ENCODE measurements at regions of chr17 and their contacts with region 1.

Region 1: GRCh38 chr17:5793899-5794298 is 209.6 kb upstream of the NLRP1 start:
- DNase-seq: peak; percentile 64
- H3K4me3 ChIP-seq: no peak overlapping the region
- H3K27ac ChIP-seq: no peak overlapping the region
- H3K4me1 ChIP-seq: no peaks in the 10 kb centered on the region
- H3K27me3 ChIP-seq: no peaks in the 10 kb centered on the region
- CTCF ChIP-seq: peak; percentile 26 to 43
- POLR2A ChIP-seq: no peak

Region 2: GRCh38 chr17:5775098-5775497 is 18.8 kb before region 1 on chr17:
- CTCF ChIA-PET with region 1: interaction called, 10 read pairs
- POLR2A ChIA-PET with region 1: no interaction called
- dilution Hi-C with region 1: no loop called
- intact Hi-C with region 1: no loop called
- DNase-seq: no peak
- H3K4me3 ChIP-seq: no peak overlapping the region
- H3K27ac ChIP-seq: no peak overlapping the region
- H3K4me1 ChIP-seq: peaks cover 1% of the 10 kb centered on the region
- H3K27me3 ChIP-seq: no peaks in the 10 kb centered on the region
- CTCF ChIP-seq: no peak
- POLR2A ChIP-seq: no peak

Region 3: GRCh38 chr17:6413065-6413464 is 619.2 kb after region 1 on chr17:
- CTCF ChIA-PET with region 1: interaction called, 29 read pairs
- POLR2A ChIA-PET with region 1: no interaction called
- dilution Hi-C with region 1: no loop called
- intact Hi-C with region 1: loop called (anchors 1 kb)
- DNase-seq: peak; percentile 67
- H3K4me3 ChIP-seq: no peak overlapping the region
- H3K27ac ChIP-seq: no peak overlapping the region
- H3K4me1 ChIP-seq: no peaks in the 10 kb centered on the region
- H3K27me3 ChIP-seq: no peaks in the 10 kb centered on the region
- CTCF ChIP-seq: peak; percentile 50 to 56
- POLR2A ChIP-seq: no peak